CD8-positive, alpha-beta T cell (primary cell): ENCODE measurements at regions of chr6 and their contacts with region 1.

Region 1: DNA sequence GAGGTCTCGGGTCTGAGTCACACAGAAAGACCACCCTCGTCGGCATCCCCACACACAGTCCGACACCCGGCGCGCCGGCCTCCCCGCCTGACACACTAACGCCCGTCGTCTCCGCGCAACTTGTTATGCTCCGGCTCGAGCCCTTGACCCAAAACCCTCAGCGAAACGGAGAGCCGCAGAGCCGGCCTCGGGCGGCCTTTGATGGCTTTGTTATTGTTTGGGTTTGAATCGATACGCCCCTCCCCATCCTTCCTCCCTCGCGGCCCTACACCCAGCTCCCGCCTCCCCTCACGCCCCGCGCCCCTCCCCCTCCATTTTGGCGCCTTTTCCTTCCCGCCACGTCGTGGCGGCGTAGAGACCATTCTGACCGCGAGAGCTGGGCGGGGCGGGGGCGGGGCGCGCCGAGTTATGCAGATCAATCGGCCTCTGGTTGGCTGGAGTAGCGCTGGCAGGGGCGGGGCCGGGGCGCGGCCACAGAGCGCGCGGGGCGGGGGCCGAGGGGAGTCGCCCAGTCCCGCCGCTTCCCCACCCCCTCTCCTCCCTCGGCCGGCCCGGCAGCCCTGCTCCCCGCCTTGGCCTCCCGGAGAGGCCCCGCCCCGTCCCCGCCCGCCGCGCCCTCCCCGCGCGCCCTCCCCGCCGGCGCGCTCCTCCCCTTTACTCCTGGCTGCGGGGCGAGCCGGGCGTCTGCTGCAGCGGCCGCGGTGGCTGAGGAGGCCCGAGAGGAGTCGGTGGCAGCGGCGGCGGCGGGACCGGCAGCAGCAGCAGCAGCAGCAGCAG is at the start of gene PIM1:
- DNase-seq: peak; percentile 98 to 100 (median 99)
- ATAC-seq: peak; percentile 83
- H3K4me3 ChIP-seq: peak within 1 kb of the TSS; percentile 87 to 97
- H3K4me3 Mint-ChIP-seq: peak within 1 kb of the TSS; percentile 92
- H3K27ac ChIP-seq: peak within 1 kb of the TSS; percentile 74 to 78
- H3K27ac Mint-ChIP-seq: peak within 1 kb of the TSS; percentile 88
- H3K4me1 ChIP-seq: peaks cover 23% of the 10 kb centered on the region
- H3K4me1 Mint-ChIP-seq: peaks cover 41% of the 10 kb centered on the region
- H3K27me3 ChIP-seq: no peaks in the 10 kb centered on the region
- H3K27me3 Mint-ChIP-seq: no peaks in the 10 kb centered on the region
- CTCF ChIP-seq: no peak
- total RNA-seq, gene PIM1: 125 TPM

Region 2: GRCh38 chr6:36599791-36600209 is 569.9 kb before region 1 on chr6:
- CTCF ChIA-PET with region 1: no interaction called
- POLR2A ChIA-PET with region 1: no interaction called
- intact Hi-C with region 1: loop called (anchors 5 to 10 kb)
- DNase-seq: peak; percentile 21 to 75 (median 58)
- ATAC-seq: peak; percentile 59
- H3K4me3 ChIP-seq: peak overlapping the region; percentile 25 to 40
- H3K4me3 Mint-ChIP-seq: peak overlapping the region; percentile 97
- H3K27ac ChIP-seq: peak overlapping the region in 1 of 2 experiments; percentile 78
- H3K27ac Mint-ChIP-seq: peak overlapping the region; percentile 67
- H3K4me1 ChIP-seq: peaks cover 79% of the 10 kb centered on the region
- H3K4me1 Mint-ChIP-seq: peaks cover 78% of the 10 kb centered on the region
- H3K27me3 ChIP-seq: no peaks in the 10 kb centered on the region
- H3K27me3 Mint-ChIP-seq: no peaks in the 10 kb centered on the region
- CTCF ChIP-seq: no peak

Region 3: DNA sequence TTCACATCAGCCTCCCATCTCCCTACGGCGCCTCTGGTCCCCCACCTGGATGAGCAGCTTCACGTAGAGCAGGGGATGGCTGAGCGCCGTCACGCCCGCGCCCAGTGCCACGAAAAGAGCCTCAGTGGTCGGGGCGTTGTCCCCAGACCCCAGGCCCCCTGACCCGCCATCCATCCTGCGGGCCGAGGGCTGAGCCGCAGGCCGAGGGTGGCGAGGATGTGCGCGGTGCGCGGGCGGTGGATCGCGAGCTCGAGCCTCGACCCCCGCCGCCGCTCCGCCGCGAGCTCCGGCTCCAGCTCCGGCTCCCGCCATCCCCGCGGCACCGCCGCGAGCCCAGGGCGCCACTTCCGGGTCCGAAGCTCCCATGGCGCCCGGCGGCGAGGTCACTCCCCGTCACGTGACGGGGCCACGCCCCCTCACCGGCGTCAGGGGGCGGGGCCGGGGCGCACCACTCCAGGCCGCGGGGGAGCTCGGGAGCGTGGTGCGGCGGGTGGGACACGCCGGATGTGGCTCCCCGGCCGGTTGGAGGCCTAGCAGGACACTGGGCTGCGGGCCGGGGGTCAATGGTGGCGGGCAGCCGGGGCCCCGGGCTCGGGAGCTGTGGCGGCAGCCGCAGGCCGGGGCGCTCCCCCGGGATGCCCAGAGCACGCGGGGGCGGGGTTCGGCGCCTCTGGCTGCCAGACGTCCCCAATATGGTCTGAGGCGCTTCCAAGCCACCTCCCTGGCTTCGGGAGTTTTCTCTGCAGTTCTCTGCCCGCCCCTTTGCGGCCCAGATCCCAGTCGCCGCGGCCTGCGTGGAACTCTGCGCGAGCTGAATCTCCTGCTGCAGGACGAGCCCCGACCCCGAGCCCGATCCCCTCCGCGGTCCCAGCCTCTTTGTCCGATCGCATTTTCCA is 183.6 kb before region 1 on chr6 and contains the start of gene MTCH1:
- CTCF ChIA-PET with region 1: interaction called, 4 read pairs
- POLR2A ChIA-PET with region 1: interaction called, 8 read pairs
- intact Hi-C with region 1: loop called (anchors 1 kb)
- DNase-seq: peak; percentile 74 to 95 (median 87)
- ATAC-seq: peak; percentile 82
- H3K4me3 ChIP-seq: peak within 1 kb of the TSS; percentile 97
- H3K4me3 Mint-ChIP-seq: no peak within 1 kb of the TSS
- H3K27ac ChIP-seq: peak within 1 kb of the TSS; percentile 83 to 85
- H3K27ac Mint-ChIP-seq: peak within 1 kb of the TSS; percentile 98
- H3K4me1 ChIP-seq: peaks cover 41% of the 10 kb centered on the region
- H3K4me1 Mint-ChIP-seq: peaks cover 20% of the 10 kb centered on the region
- H3K27me3 ChIP-seq: no peaks in the 10 kb centered on the region
- H3K27me3 Mint-ChIP-seq: no peaks in the 10 kb centered on the region
- CTCF ChIP-seq: no peak
- total RNA-seq, gene MTCH1: 267 to 269 TPM

Region 4: GRCh38 chr6:37038292-37039198 is 131.1 kb before region 1 on chr6:
- CTCF ChIA-PET with region 1: interaction called, 12 read pairs
- POLR2A ChIA-PET with region 1: interaction called, 3 read pairs
- intact Hi-C with region 1: no loop called
- DNase-seq: no peak
- ATAC-seq: no peak
- H3K4me3 ChIP-seq: no peak overlapping the region
- H3K4me3 Mint-ChIP-seq: no peak overlapping the region
- H3K27ac ChIP-seq: no peak overlapping the region
- H3K27ac Mint-ChIP-seq: no peak overlapping the region
- H3K4me1 ChIP-seq: no peaks in the 10 kb centered on the region
- H3K4me1 Mint-ChIP-seq: peaks cover 9% of the 10 kb centered on the region
- H3K27me3 ChIP-seq: no peaks in the 10 kb centered on the region
- H3K27me3 Mint-ChIP-seq: no peaks in the 10 kb centered on the region
- CTCF ChIP-seq: no peak

Region 5: DNA sequence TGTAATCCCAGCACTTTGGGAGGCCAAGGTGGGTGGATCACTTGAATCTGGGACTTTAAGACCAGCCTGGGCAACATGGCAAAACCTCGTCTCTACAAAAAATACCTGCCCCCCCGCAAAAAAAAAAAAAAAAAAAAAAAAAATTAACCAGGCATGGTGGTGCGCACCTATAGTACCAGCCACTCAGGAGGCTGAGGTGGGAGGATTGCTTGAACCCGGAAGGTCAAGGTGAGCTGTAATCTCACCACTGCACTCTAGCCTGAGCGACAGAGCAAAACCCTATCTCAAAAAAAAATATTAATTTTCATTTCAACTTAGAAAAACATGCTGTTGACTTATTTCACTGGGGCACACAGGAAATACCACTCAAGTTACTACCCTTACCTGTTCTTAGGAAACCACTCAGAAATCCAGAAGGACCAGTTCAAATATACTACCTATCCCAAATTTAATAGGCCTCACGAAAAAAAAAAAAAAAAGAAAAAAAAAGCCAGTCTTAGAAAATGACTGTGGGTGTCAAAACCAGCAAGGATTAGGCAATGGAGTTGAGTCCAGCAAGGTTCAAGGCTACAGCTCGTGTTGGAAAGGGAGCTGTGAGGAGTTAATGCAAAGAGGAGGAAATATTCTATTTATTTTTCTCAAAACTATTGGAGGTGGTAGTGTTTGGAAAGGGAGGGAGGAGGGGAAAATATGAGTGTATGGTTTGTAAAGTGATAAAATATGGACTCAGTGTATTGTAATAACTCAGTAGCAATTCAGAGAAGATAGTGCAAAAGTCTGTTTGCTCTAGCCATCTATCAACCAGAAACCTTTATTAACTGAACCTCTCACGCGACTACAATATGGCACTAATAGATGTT is 33.6 kb before region 1 on chr6:
- CTCF ChIA-PET with region 1: no interaction called
- POLR2A ChIA-PET with region 1: no interaction called
- intact Hi-C with region 1: no loop called
- DNase-seq: no peak
- ATAC-seq: no peak
- H3K4me3 ChIP-seq: no peak overlapping the region
- H3K4me3 Mint-ChIP-seq: no peak overlapping the region
- H3K27ac ChIP-seq: no peak overlapping the region
- H3K27ac Mint-ChIP-seq: no peak overlapping the region
- H3K4me1 ChIP-seq: peaks cover 6% of the 10 kb centered on the region
- H3K4me1 Mint-ChIP-seq: peaks cover 17% of the 10 kb centered on the region
- H3K27me3 ChIP-seq: no peaks in the 10 kb centered on the region
- H3K27me3 Mint-ChIP-seq: no peaks in the 10 kb centered on the region
- CTCF ChIP-seq: no peak

Region 6: GRCh38 chr6:37182736-37183590 is 13.3 kb after region 1 on chr6:
- CTCF ChIA-PET with region 1: interaction called, 34 read pairs
- POLR2A ChIA-PET with region 1: interaction called, 17 read pairs
- intact Hi-C with region 1: loop called in 1 of 2 experiments (anchors 2 kb)
- DNase-seq: peak in 8 of 9 experiments; percentile 33 to 87 (median 68)
- ATAC-seq: peak; percentile 96
- H3K4me3 ChIP-seq: peak overlapping the region in 1 of 2 experiments; percentile 34
- H3K4me3 Mint-ChIP-seq: peak overlapping the region; percentile 62
- H3K27ac ChIP-seq: peak overlapping the region; percentile 61 to 73
- H3K27ac Mint-ChIP-seq: peak overlapping the region; percentile 95
- H3K4me1 ChIP-seq: peaks cover 78% of the 10 kb centered on the region
- H3K4me1 Mint-ChIP-seq: peaks cover 63% of the 10 kb centered on the region
- H3K27me3 ChIP-seq: no peaks in the 10 kb centered on the region
- H3K27me3 Mint-ChIP-seq: no peaks in the 10 kb centered on the region
- CTCF ChIP-seq: no peak

Region 7: GRCh38 chr6:37207903-37208456 is 38.3 kb after region 1 on chr6:
- CTCF ChIA-PET with region 1: interaction called, 225 read pairs
- POLR2A ChIA-PET with region 1: interaction called, 34 read pairs
- intact Hi-C with region 1: loop called (anchors 1 kb)
- DNase-seq: peak; percentile 75 to 95 (median 87)
- ATAC-seq: peak; percentile 70
- H3K4me3 ChIP-seq: no peak overlapping the region
- H3K4me3 Mint-ChIP-seq: peak overlapping the region; percentile 35
- H3K27ac ChIP-seq: peak overlapping the region in 1 of 2 experiments; percentile 4
- H3K27ac Mint-ChIP-seq: peak overlapping the region; percentile 85
- H3K4me1 ChIP-seq: peaks cover 51% of the 10 kb centered on the region
- H3K4me1 Mint-ChIP-seq: peaks cover 51% of the 10 kb centered on the region
- H3K27me3 ChIP-seq: no peaks in the 10 kb centered on the region
- H3K27me3 Mint-ChIP-seq: no peaks in the 10 kb centered on the region
- CTCF ChIP-seq: peak; percentile 83

Region 8: GRCh38 chr6:37516076-37516919 is 346.6 kb after region 1 on chr6:
- CTCF ChIA-PET with region 1: no interaction called
- POLR2A ChIA-PET with region 1: no interaction called
- intact Hi-C with region 1: loop called in 1 of 2 experiments (anchors 10 kb)
- DNase-seq: peak; percentile 76 to 99 (median 90)
- ATAC-seq: peak; percentile 80
- H3K4me3 ChIP-seq: peak overlapping the region; percentile 35 to 52
- H3K4me3 Mint-ChIP-seq: peak overlapping the region; percentile 88
- H3K27ac ChIP-seq: peak overlapping the region; percentile 80 to 94
- H3K27ac Mint-ChIP-seq: peak overlapping the region; percentile 99
- H3K4me1 ChIP-seq: peaks cover 85% of the 10 kb centered on the region
- H3K4me1 Mint-ChIP-seq: peaks cover 80% of the 10 kb centered on the region
- H3K27me3 ChIP-seq: no peaks in the 10 kb centered on the region
- H3K27me3 Mint-ChIP-seq: no peaks in the 10 kb centered on the region
- CTCF ChIP-seq: no peak